MCF 10A (cell line): ENCODE measurements at regions of chr12 and their contacts with region 1.

Region 1: DNA sequence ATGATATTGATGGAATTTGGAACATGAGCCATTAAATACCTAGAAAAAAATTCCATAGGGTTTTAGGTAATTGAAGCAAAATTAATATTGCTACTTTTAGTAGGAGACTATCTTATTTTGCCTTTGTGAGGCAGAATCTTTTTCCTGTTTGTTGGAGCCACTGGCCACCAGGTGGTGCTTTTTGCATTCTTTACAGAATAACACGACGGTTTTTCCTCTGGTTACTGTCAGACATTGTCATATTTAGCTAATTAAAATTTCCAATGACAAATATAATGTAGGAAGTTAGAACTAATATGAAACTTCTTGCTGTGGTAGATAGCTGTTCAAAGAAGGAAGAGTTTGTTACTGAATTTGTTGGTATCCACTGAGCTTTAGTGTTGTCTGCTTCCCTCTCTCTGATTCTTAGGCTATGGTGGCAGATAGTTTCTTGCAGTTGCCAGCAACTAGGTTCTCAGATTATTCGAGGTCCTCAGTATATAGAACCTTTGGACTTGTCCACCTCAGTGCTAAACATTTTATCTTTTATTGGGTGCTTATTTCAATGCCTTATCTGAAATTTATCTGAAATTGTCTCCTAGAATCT is 25.7 kb downstream of the RAB21 start:
- DNase-seq: peak; percentile 59
- H3K4me3 Mint-ChIP-seq: no peak overlapping the region
- H3K27ac Mint-ChIP-seq: no peak overlapping the region
- H3K4me1 Mint-ChIP-seq: peaks cover 5% of the 10 kb centered on the region
- H3K27me3 Mint-ChIP-seq: no peaks in the 10 kb centered on the region
- CTCF ChIP-seq: peak; percentile 62

Region 2: DNA sequence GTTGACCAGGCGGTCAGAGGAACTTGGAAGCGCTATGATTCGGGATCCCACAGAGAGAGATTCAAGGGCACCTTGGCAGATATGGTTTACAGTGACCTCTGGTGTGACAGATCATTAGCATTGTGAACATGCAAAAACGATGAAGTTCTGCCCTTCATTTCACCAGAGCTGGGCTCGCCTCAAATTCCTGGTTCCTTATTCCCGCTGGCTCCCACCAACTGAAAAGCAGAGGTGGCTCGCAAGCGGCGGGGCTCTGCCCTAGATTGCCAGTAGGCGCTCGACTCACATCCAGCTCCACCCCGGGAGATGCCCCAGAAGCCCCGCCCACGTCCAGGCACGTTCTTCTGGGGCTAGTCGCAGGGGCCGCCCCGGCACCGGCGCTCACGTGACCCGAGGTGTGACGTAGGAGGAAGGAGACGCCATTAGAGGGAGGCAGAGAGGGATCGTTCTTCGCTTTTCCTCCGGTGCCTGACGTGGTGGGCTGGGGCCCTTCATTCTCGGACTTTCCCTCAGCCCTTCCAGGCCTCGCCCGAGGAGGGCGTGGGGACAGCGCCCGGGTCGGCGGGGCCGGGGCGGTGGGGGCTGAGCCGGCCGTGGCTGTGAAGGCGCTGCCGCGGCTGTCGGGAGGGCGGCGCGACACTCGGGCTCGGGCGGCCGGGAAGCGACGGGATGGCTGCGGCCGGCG is 25.7 kb before region 1 on chr12 and contains the start of gene RAB21:
- CTCF ChIA-PET with region 1: interaction called, 16 read pairs
- POLR2A ChIA-PET with region 1: interaction called, 10 read pairs
- intact Hi-C with region 1: no loop called
- DNase-seq: peak; percentile 98
- H3K4me3 Mint-ChIP-seq: peak within 1 kb of the TSS; percentile 86
- H3K27ac Mint-ChIP-seq: peak within 1 kb of the TSS; percentile 89
- H3K4me1 Mint-ChIP-seq: no peaks in the 10 kb centered on the region
- H3K27me3 Mint-ChIP-seq: peaks cover 23% of the 10 kb centered on the region
- CTCF ChIP-seq: no peak
- total RNA-seq, gene RAB21: 86.4 and 88.0 TPM in 2 replicates

Region 3: DNA sequence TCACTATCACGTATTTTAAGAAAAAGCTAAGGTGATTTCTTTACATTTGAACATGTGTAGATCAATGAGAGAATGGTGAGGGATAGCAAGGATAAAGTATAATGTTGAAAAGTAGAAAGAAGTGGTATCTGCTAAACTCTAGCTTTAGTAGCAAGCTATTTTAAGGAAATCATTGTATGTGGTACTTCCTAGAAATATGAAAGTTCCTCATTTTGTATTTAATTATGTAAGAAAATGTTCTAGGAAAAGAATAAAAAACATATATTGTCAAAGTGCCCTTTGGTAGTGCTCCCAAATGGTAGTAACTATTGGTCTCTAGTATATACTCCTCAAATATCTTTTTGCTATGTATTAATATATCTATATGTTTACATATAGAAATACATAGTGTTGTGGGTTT is 10.0 kb after region 1 on chr12:
- CTCF ChIA-PET with region 1: interaction called, 34 read pairs
- POLR2A ChIA-PET with region 1: interaction called, 8 read pairs
- intact Hi-C with region 1: no loop called
- DNase-seq: no peak
- H3K4me3 Mint-ChIP-seq: no peak overlapping the region
- H3K27ac Mint-ChIP-seq: no peak overlapping the region
- H3K4me1 Mint-ChIP-seq: no peaks in the 10 kb centered on the region
- H3K27me3 Mint-ChIP-seq: no peaks in the 10 kb centered on the region
- CTCF ChIP-seq: no peak

Region 4: GRCh38 chr12:71846322-71846940 is 66.1 kb after region 1 on chr12:
- CTCF ChIA-PET with region 1: interaction called, 75 read pairs
- POLR2A ChIA-PET with region 1: interaction called, 5 read pairs
- intact Hi-C with region 1: loop called (anchors 1 kb)
- DNase-seq: peak; percentile 57
- H3K4me3 Mint-ChIP-seq: no peak overlapping the region
- H3K27ac Mint-ChIP-seq: no peak overlapping the region
- H3K4me1 Mint-ChIP-seq: peaks cover 4% of the 10 kb centered on the region
- H3K27me3 Mint-ChIP-seq: no peaks in the 10 kb centered on the region
- CTCF ChIP-seq: peak; percentile 48

Region 5: GRCh38 chr12:71900091-71900490 is 119.8 kb after region 1 on chr12:
- CTCF ChIA-PET with region 1: interaction called, 7 read pairs
- POLR2A ChIA-PET with region 1: no interaction called
- intact Hi-C with region 1: loop called (anchors 1 kb)
- DNase-seq: peak; percentile 21
- H3K4me3 Mint-ChIP-seq: no peak overlapping the region
- H3K27ac Mint-ChIP-seq: no peak overlapping the region
- H3K4me1 Mint-ChIP-seq: no peaks in the 10 kb centered on the region
- H3K27me3 Mint-ChIP-seq: no peaks in the 10 kb centered on the region
- CTCF ChIP-seq: peak; percentile 28

Region 6: GRCh38 chr12:72365151-72365550 is 584.8 kb after region 1 on chr12:
- CTCF ChIA-PET with region 1: no interaction called
- POLR2A ChIA-PET with region 1: no interaction called
- intact Hi-C with region 1: no loop called
- DNase-seq: no peak
- H3K4me3 Mint-ChIP-seq: no peak overlapping the region
- H3K27ac Mint-ChIP-seq: no peak overlapping the region
- H3K4me1 Mint-ChIP-seq: no peaks in the 10 kb centered on the region
- H3K27me3 Mint-ChIP-seq: no peaks in the 10 kb centered on the region
- CTCF ChIP-seq: no peak